ENCODE measurements at regions of chr5 and their contacts with region 1.

Region 1: GRCh38 chr5:81787474-81788242 is 36.8 kb upstream of the SSBP2 start:
- DNase-seq: peak; percentile 80
- H3K4me3 ChIP-seq: peak overlapping the region; percentile 20
- H3K27ac ChIP-seq: peak overlapping the region; percentile 26
- H3K4me1 ChIP-seq: peaks cover 22% of the 10 kb centered on the region
- CTCF ChIP-seq: no peak

Region 2: DNA sequence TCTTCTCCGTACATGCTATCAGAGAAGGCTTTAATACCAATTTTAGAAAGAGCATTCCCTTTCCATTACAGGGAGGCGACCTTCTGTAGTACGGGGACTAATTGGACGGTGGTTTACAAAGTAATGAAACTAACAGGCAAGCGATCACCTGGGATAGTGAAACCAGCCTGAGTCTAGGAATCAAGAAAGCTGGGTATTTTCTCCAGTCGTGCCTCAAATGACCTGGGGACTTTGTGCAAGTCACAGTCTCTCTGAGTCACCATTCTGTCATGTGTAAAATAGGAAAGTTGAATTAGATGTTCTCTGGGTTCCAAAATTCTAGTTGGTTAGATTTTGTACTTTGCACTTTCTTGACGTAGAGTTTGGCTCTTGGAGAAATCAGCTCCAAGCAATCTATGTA is 14.1 kb before region 1 on chr5:
- CTCF ChIA-PET with region 1: no interaction called
- POLR2A ChIA-PET with region 1: interaction called, 17 read pairs
- intact Hi-C with region 1: no loop called
- DNase-seq: no peak
- H3K4me3 ChIP-seq: no peak overlapping the region
- H3K27ac ChIP-seq: no peak overlapping the region
- H3K4me1 ChIP-seq: peaks cover 4% of the 10 kb centered on the region
- CTCF ChIP-seq: no peak

Region 3: GRCh38 chr5:81800797-81801196 is 13.1 kb after region 1 on chr5:
- CTCF ChIA-PET with region 1: no interaction called
- POLR2A ChIA-PET with region 1: interaction called, 11 read pairs
- intact Hi-C with region 1: no loop called
- DNase-seq: no peak
- H3K4me3 ChIP-seq: no peak overlapping the region
- H3K27ac ChIP-seq: no peak overlapping the region
- H3K4me1 ChIP-seq: peaks cover 7% of the 10 kb centered on the region
- CTCF ChIP-seq: no peak

Measured in OCI-LY7 (cell line).